ENCODE measurements at regions of chr22 and their contacts with region 1.

Region 1: DNA sequence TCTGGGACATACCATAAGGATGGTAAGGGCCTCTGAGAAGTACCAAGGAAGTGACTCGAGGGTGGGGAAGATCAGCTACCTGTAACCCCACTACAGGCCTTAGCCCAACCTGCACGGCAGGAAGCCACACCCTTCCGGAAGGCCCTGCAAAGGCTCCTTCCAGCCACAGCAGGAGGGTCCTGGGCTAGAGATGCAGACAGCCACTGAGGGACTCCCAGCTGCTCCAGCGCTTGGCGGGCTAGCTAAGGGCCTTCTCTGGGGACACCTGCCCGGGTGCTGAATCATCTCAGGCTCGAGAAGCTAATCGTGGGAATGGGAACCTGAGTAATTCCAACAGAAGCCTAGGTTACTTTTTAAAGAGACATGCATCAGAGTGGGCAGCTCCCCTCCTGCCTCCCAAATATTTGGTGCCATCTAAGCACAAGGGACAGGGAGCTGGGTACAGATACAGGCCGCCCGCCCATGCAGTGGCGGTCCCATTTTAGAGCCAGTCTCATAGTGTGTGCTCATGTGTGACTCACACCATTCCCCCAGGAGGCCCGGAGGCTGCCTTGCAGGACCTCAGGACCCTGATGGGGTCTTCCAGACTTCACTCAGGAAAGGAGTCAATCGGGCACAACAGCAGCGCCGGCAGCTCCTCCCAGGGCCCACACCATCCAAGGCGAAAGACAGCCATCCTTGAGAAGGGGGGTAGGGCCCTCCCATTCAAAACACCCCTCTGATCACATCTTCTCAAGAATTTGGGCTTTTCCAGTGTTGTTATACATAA is 8.0 kb downstream of the MYH9 start:
- DNase-seq: peak; percentile 59
- ATAC-seq: peak; percentile 62
- H3K4me3 Mint-ChIP-seq: peak overlapping the region; percentile 78
- H3K27ac Mint-ChIP-seq: peak overlapping the region; percentile 97
- H3K4me1 Mint-ChIP-seq: peaks cover 83% of the 10 kb centered on the region
- H3K27me3 Mint-ChIP-seq: no peaks in the 10 kb centered on the region

Region 2: DNA sequence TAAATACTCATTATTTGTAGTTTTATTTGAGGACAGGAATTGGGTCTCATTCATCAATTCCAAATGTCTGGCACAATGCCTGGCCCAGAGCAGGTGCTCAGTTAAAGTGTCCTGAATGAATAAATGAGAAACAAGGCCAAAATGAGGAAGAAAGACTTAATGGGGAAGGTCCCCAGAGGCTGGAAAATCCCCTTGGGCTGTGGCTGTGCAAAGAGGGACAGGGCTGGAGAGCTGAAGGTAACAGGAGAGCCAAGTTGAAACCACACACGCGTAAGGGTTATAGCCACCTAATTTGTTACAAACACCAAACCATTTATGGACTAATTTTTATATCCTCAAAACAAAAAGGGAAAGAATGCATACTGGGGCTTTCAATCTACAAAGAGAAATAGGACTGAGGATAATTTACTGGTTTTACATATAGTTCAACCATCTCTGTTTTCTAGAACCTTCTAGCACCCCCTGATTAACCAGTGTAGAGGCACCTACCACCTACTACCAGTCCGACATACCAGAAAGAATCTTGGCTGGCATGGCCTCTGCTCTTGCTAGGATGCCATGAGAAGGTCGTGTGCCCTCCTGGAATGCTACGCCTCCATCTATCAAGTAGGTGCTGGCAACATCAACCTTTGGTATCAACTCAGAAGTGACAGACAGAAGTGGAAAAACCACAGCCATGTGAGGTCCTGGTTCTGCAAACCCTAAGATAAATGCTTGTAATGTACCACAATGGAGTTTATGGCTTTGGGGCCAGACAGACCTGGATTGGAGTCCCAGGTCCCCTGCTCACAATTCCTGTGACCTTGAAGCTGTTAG is 20.4 kb before region 1 on chr22:
- POLR2A ChIA-PET with region 1: interaction called, 38 read pairs
- DNase-seq: no peak
- ATAC-seq: no peak
- H3K4me3 Mint-ChIP-seq: peak overlapping the region; percentile 60
- H3K27ac Mint-ChIP-seq: peak overlapping the region; percentile 87
- H3K4me1 Mint-ChIP-seq: peaks cover 84% of the 10 kb centered on the region
- H3K27me3 Mint-ChIP-seq: no peaks in the 10 kb centered on the region

Region 3: GRCh38 chr22:36541831-36542411 is 162.1 kb after region 1 on chr22:
- POLR2A ChIA-PET with region 1: no interaction called
- DNase-seq: no peak
- ATAC-seq: peak; percentile 91
- H3K4me3 Mint-ChIP-seq: peak overlapping the region; percentile 32
- H3K27ac Mint-ChIP-seq: peak overlapping the region; percentile 82
- H3K4me1 Mint-ChIP-seq: peaks cover 28% of the 10 kb centered on the region
- H3K27me3 Mint-ChIP-seq: peaks cover 5% of the 10 kb centered on the region

Measured in activated naive CD8-positive, alpha-beta T cell treated with anti-CD3 and anti-CD28 coated beads, Interleukin-2, amount 10 ng/mL, durations not matched to agents 7 days and 5 days (primary cell).